Aorta (tissue), 5 donors: ENCODE measurements at regions of chr18 and their contacts with region 1.

Region 1: GRCh38 chr18:50819728-50820378 is at the start of gene MRO:
- DNase-seq: peak; percentile 88 to 92
- ATAC-seq: peak; percentile 94
- H3K4me3 ChIP-seq: peak within 1 kb of the TSS; percentile 31 to 52
- H3K27ac ChIP-seq: no peak within 1 kb of the TSS
- H3K4me1 ChIP-seq: no peaks in the 10 kb centered on the region
- H3K27me3 ChIP-seq: no peaks in the 10 kb centered on the region
- total RNA-seq, gene MRO: 1.7 to 3.2 TPM

Region 2: DNA sequence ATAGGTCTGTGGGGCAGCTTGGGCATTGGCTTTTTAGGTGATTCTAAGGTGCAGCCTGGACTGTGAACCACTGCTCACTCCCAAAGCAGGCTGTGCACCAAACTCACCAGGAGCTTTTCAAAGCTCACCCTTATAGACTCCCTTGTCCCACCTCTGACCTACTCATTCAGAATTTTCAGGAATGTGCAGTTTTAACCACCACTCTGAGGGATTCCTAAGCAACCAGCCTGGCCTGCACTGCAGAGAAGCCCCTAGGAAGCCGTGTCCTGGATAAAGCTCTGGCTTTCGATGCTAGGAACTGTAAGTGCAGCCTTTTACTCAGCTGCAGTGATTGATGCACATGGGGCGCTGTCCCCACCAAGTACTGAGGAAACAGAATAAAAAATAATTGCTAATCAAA is 33.0 kb before region 1 on chr18:
- intact Hi-C with region 1: no loop called
- DNase-seq: no peak
- ATAC-seq: no peak
- H3K4me3 ChIP-seq: no peak overlapping the region
- H3K27ac ChIP-seq: no peak overlapping the region
- H3K4me1 ChIP-seq: no peaks in the 10 kb centered on the region
- H3K27me3 ChIP-seq: no peaks in the 10 kb centered on the region

Region 3: GRCh38 chr18:51039138-51040112 is 219.6 kb after region 1 on chr18:
- intact Hi-C with region 1: loop called in 1 of 2 experiments (anchors 10 kb)
- DNase-seq: no peak
- ATAC-seq: no peak
- H3K4me3 ChIP-seq: no peak overlapping the region
- H3K27ac ChIP-seq: no peak overlapping the region
- H3K4me1 ChIP-seq: peaks cover 4 to 16% of the 10 kb centered on the region in 2 donors
- H3K27me3 ChIP-seq: no peaks in the 10 kb centered on the region

Region 4: DNA sequence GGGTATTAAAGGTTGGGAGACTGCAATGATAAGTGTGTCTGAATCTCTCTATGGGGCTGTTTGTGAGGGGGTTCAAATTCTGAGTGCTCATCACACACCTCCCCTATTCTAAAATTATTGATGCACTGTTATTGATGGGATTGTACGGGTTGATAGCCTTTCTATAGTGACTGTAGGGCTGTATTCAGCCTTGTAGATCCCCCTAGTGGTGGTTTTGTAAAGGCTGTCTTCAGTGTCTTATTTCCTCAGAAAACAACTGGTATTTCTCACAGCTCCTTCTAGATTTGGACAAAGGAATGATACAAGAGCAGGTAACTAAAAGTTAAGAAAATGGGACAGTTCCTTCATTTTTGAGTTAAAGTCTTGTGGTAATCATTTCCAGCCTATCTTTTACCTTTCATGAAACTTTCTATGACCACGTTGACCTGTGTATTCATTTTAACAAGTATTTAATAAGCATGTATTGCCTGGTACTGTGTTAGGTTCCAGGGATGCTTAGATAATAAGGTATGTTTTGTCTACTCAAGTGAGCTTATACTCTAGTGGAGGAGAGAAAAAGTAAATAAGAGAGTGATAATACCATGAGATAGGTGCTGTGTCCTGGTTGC is 231.4 kb after region 1 on chr18:
- intact Hi-C with region 1: loop called (anchors 10 kb)
- DNase-seq: no peak
- ATAC-seq: peak; percentile 73
- H3K4me3 ChIP-seq: no peak overlapping the region
- H3K27ac ChIP-seq: no peak overlapping the region
- H3K4me1 ChIP-seq: no peaks in the 10 kb centered on the region
- H3K27me3 ChIP-seq: no peaks in the 10 kb centered on the region